CD4-positive, alpha-beta T cell (primary cell): ENCODE measurements at regions of chr12 and their contacts with region 1.

Region 1: GRCh38 chr12:76927170-76927784 is 48.5 kb upstream of the CSRP2 start:
- DNase-seq: peak in 6 of 14 experiments; percentile 1 to 27 (median 8)
- ATAC-seq: no peak
- H3K4me3 ChIP-seq: no peak overlapping the region
- H3K4me3 Mint-ChIP-seq: no peak overlapping the region
- H3K27ac ChIP-seq: no peak overlapping the region
- H3K27ac Mint-ChIP-seq: no peak overlapping the region
- H3K4me1 ChIP-seq: no peaks in the 10 kb centered on the region
- H3K4me1 Mint-ChIP-seq: no peaks in the 10 kb centered on the region
- H3K27me3 ChIP-seq: peaks cover 0 to 4% of the 10 kb centered on the region in 2 experiments
- H3K27me3 Mint-ChIP-seq: peaks cover 11% of the 10 kb centered on the region
- CTCF ChIP-seq: no peak

Region 2: DNA sequence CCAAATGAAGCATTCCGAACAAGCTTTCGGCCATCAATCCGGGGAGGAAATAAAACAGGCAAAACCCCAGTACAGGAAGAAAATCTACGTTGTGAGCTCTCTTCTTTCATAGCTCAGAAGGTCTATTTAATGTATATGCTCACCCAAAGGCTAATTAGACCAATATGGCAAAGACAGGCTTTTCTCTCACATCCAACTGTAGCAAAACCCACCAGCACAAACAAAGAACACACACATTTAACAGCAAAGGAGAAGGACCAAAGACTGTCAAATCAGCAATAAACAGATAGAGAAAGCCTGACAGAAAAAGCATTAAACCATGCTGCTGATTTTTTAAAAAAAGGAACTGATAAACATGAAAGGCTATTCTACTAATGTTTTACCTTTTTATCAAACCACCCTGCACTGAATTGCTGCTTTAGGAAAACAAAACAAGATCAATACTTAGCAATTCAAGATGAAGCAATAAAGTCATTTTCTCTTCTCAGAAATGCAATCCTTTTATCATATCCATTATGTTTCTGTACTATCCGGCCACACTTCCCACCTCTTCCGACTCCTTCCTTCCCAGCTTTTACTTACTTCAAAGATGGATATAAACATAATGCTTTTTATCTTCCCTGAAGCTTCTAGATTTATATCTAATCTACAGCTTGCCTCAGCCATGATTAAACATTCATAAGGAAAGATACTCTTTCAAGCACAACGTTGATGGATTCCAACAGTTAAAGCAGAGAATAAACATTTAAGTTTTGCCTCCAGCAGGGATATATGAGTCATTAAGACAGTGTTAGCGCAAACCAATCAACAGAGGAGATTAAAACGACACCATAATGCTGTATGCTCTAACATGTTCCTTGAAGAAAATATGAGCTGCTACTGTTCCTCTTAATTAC is 504.5 kb before region 1 on chr12:
- CTCF ChIA-PET with region 1: no interaction called
- POLR2A ChIA-PET with region 1: no interaction called
- intact Hi-C with region 1: no loop called
- DNase-seq: no peak
- ATAC-seq: no peak
- H3K4me3 ChIP-seq: no peak overlapping the region
- H3K4me3 Mint-ChIP-seq: no peak overlapping the region
- H3K27ac ChIP-seq: no peak overlapping the region
- H3K27ac Mint-ChIP-seq: no peak overlapping the region
- H3K4me1 ChIP-seq: no peaks in the 10 kb centered on the region
- H3K4me1 Mint-ChIP-seq: peaks cover 43% of the 10 kb centered on the region
- H3K27me3 ChIP-seq: no peaks in the 10 kb centered on the region
- H3K27me3 Mint-ChIP-seq: no peaks in the 10 kb centered on the region
- CTCF ChIP-seq: no peak

Region 3: GRCh38 chr12:76621582-76622024 is 305.7 kb before region 1 on chr12:
- CTCF ChIA-PET with region 1: no interaction called
- POLR2A ChIA-PET with region 1: no interaction called
- intact Hi-C with region 1: loop called (anchors 5 kb)
- DNase-seq: peak; percentile 50 to 84 (median 64)
- ATAC-seq: peak; percentile 97
- H3K4me3 ChIP-seq: no peak overlapping the region
- H3K4me3 Mint-ChIP-seq: no peak overlapping the region
- H3K27ac ChIP-seq: no peak overlapping the region
- H3K27ac Mint-ChIP-seq: no peak overlapping the region
- H3K4me1 ChIP-seq: no peaks in the 10 kb centered on the region
- H3K4me1 Mint-ChIP-seq: peaks cover 6% of the 10 kb centered on the region
- H3K27me3 ChIP-seq: no peaks in the 10 kb centered on the region
- H3K27me3 Mint-ChIP-seq: no peaks in the 10 kb centered on the region
- CTCF ChIP-seq: peak; percentile 97